ENCODE measurements at regions of chr11 and their contacts with region 1.

Region 1: GRCh38 chr11:57493507-57494503 is 21.7 kb downstream of the SLC43A1 start:
- DNase-seq: peak; percentile 76
- H3K4me3 Mint-ChIP-seq: no peak overlapping the region
- H3K27ac Mint-ChIP-seq: peak overlapping the region; percentile 73
- H3K4me1 Mint-ChIP-seq: peaks cover 12% of the 10 kb centered on the region
- H3K27me3 Mint-ChIP-seq: no peaks in the 10 kb centered on the region

Region 2: DNA sequence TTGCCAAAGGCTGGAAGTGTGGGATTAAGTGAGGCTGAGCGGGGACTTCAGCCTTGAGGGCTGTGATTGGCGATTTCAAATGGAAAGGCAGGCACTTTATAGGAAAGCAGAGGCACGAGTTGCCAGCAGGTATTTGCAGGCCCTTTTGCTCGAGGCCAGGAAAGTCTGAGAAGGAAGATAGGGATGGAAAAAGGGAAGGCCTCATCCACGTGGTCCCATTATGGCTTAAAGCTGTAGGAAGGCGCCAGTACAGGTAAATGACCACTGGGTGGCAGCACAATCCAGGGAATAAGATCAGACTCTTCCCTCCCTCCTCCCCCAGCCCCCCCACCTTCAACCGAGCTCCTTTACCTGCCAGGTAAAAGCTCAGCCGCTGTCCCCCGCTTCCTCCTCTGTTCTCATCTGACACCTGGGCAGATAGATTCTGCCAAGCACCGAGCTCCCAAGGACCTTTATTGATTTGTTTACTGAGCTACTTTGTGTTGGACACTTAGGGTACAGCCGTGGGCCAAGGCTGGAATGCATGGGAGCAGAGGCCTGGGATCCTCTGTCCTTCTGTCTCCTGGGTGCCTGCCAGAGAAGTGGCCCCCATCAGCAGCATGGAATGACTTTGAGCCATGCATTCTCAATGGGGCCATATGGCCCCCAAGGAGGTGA is 148.1 kb before region 1 on chr11:
- CTCF ChIA-PET with region 1: interaction called, 13 read pairs
- POLR2A ChIA-PET with region 1: no interaction called
- DNase-seq: peak; percentile 67
- H3K4me3 Mint-ChIP-seq: no peak overlapping the region
- H3K27ac Mint-ChIP-seq: no peak overlapping the region
- H3K4me1 Mint-ChIP-seq: peaks cover 2% of the 10 kb centered on the region
- H3K27me3 Mint-ChIP-seq: peaks cover 5% of the 10 kb centered on the region

Region 3: GRCh38 chr11:57474017-57474802 is 19.6 kb before region 1 on chr11:
- CTCF ChIA-PET with region 1: interaction called, 24 read pairs
- POLR2A ChIA-PET with region 1: no interaction called
- DNase-seq: peak; percentile 51
- H3K4me3 Mint-ChIP-seq: no peak overlapping the region
- H3K27ac Mint-ChIP-seq: no peak overlapping the region
- H3K4me1 Mint-ChIP-seq: peaks cover 33% of the 10 kb centered on the region
- H3K27me3 Mint-ChIP-seq: peaks cover 44% of the 10 kb centered on the region

Region 4: GRCh38 chr11:57515332-57516060 is 21.7 kb after region 1 on chr11 and contains the start of gene SLC43A1:
- CTCF ChIA-PET with region 1: interaction called, 139 read pairs
- POLR2A ChIA-PET with region 1: interaction called, 30 read pairs
- DNase-seq: peak; percentile 50
- H3K4me3 Mint-ChIP-seq: peak within 1 kb of the TSS; percentile 98
- H3K27ac Mint-ChIP-seq: peak within 1 kb of the TSS; percentile 74
- H3K4me1 Mint-ChIP-seq: peaks cover 32% of the 10 kb centered on the region
- H3K27me3 Mint-ChIP-seq: no peaks in the 10 kb centered on the region
- total RNA-seq, gene SLC43A1: 29.9 to 31.7 TPM

Region 5: DNA sequence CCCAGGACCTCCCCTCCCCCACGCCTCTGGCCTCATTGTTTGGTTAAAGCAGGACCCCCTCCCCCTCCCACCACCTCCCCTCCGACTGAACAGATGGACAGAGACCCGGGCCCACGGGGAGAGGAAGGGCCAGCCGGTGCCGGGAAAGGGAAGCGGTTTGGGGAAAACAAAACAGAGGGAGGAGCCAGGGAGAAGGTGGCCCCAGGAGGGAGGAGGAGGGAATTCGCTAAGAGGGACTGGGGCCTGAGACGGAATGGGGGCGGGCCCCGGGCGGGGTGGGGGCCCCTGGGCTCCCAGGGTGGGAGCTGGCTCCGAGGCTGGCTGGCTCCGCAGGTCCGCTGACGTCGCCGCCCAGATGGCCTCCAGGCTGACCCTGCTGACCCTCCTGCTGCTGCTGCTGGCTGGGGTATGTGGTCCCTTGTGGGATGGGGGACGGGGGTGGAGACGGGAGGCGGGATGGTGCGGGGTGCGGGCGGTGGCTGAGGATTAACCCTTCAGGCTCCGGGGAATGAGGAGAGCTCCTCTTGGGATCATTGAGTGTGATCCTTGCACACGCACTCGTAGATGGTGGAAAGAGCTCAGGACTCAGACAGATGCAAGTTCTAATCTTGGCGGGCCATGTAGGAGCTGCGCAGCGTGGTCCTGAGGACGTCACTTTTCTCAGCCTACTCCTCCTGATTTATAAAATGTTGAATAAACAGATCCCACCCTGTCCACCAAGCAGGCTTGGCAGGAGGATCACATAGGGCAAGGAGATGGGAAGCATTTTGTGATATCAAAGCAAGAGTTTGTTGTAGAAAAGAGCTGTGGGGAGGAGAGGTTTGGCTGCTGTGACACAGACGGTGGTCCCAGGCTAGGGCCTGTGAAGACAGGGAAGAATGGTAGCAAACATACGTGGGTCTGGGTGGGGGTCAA is 104.4 kb after region 1 on chr11:
- CTCF ChIA-PET with region 1: no interaction called
- POLR2A ChIA-PET with region 1: no interaction called
- DNase-seq: no peak
- H3K4me3 Mint-ChIP-seq: no peak overlapping the region
- H3K27ac Mint-ChIP-seq: no peak overlapping the region
- H3K4me1 Mint-ChIP-seq: peaks cover 2% of the 10 kb centered on the region
- H3K27me3 Mint-ChIP-seq: peaks cover 36% of the 10 kb centered on the region

Region 6: GRCh38 chr11:57644748-57645688 is 151.2 kb after region 1 on chr11:
- CTCF ChIA-PET with region 1: interaction called, 48 read pairs
- POLR2A ChIA-PET with region 1: no interaction called
- DNase-seq: peak; percentile 85
- H3K4me3 Mint-ChIP-seq: no peak overlapping the region
- H3K27ac Mint-ChIP-seq: no peak overlapping the region
- H3K4me1 Mint-ChIP-seq: peaks cover 31% of the 10 kb centered on the region
- H3K27me3 Mint-ChIP-seq: peaks cover 64% of the 10 kb centered on the region